ENCODE measurements at regions of chr12 and their contacts with region 1.

Region 1: DNA sequence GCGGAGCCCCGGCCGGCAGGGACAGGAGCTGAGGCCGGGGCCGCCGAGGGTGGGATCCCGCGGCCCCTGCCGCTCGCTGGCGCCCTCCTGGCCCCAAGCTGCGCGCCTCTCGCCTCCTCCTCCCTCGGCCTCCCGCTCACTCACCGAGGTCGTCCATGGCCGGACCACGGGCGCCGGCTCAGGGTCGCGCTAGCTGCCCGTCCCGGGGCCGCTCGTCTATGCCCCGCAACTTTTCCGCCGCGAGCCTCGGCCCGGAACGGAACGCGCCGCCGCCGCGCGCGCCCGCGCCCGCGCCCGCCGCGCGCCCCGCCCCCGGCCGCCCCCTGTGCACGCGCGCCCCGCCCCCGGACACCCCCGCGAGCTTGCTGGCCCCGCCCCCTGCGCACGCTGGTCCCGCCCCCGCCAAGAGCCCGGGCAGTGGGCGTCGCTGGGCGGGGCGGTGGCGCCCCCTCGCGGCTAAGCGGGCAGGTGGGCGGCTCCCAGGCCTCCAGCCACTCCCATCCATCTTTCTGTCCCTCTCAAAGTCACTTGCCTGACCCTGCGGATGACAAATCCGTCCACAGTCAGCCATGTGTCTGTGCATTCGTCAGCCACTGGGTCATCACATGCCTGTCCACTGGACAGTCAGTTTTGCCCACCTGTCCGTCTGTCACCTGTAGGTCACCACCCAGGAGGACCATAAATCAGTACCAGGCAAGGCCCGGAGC is at the start of gene PXN:
- DNase-seq: peak; percentile 92
- ATAC-seq: peak; percentile 91
- H3K4me3 Mint-ChIP-seq: peak within 1 kb of the TSS; percentile 90
- H3K27ac Mint-ChIP-seq: peak within 1 kb of the TSS; percentile 73
- H3K4me1 Mint-ChIP-seq: peaks cover 47% of the 10 kb centered on the region
- H3K27me3 Mint-ChIP-seq: no peaks in the 10 kb centered on the region
- total RNA-seq, gene PXN: 69.3 to 146 TPM

Region 2: GRCh38 chr12:120194534-120195395 is 70.9 kb before region 1 on chr12 and contains the start of gene GCN1:
- CTCF ChIA-PET with region 1: interaction called, 86 read pairs
- DNase-seq: peak; percentile 89
- ATAC-seq: peak; percentile 85
- H3K4me3 Mint-ChIP-seq: peak within 1 kb of the TSS; percentile 90
- H3K27ac Mint-ChIP-seq: peak within 1 kb of the TSS; percentile 95
- H3K4me1 Mint-ChIP-seq: peaks cover 70% of the 10 kb centered on the region
- H3K27me3 Mint-ChIP-seq: no peaks in the 10 kb centered on the region
- total RNA-seq, gene GCN1: 126 to 151 TPM

Region 3: DNA sequence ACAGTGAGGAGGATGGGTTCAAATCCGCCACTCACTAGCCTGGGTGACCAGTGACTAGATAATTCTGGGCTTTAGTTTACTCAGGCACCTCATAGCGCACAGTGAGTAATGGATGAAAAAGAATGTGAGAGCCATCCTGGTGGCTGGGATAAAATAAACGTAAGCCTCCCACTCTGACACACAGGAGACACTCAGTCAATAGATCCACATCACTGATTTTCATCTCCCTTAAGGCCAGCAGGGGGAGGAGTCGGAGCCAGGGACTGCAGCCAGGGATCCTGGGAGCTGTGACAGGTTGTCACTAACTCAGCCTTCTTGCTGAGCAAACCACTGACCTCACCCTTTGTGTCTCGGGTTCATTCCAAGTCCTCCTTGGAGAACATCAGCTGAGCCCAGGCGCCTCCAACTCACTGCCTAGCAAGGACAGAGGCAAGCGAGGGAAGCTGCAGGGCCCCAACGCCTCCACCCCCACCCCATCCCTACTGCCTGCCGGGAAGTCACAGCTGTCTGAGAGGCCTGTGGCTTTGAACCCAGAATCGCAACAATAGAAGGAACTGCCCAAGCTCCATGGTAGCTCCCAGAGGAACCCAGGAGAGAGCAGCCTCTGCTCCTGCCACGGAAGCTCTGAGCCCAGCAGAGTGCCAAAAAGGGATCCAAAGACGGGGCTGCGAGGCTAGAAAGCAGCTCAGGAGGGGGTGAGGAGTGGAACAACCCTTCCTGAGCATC is 30.8 kb before region 1 on chr12:
- CTCF ChIA-PET with region 1: interaction called, 768 read pairs
- DNase-seq: no peak
- ATAC-seq: no peak
- H3K4me3 Mint-ChIP-seq: no peak overlapping the region
- H3K27ac Mint-ChIP-seq: no peak overlapping the region
- H3K4me1 Mint-ChIP-seq: peaks cover 67% of the 10 kb centered on the region
- H3K27me3 Mint-ChIP-seq: no peaks in the 10 kb centered on the region

Region 4: DNA sequence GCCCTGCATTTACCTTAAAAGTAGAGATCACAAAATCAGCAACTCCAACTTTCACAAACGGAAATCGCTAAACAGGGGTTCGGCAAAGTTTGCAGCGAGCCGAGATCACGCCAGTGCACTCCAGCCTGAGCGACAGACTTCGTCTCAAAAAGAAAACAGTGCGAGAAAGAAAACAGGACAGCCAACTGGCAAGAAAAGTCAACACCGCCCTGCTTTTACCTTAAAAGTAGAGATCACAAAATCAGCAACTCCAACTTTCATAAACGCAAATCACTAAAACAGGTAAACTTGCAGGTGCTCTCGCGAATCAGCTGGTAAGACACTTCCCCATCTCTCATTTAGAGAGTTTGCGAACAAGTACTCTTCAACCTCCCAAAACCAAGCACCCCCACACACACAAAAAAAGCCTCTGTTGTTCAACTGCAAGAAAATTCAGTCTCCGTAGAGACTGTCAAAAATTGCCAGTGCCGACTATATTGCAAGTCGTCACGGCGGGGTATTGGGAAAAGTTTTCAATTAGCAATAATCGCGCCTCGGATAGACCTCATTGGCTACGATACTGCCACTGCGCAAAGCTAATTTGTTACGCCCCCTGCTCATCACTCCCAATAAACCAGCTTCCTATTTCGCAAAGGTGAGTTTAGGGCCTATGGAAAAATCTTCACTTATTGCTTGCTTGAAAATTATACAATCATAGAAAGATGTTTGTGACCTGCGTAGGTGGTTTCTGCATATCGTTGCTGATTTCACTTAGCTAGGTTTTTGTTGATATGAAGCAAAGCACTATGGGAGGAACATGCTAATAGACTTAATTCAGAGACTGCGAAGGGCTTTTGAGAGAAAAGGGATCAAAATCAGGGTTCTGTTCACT is 27.3 kb after region 1 on chr12 and contains the start of gene RNU4-1:
- CTCF ChIA-PET with region 1: interaction called, 27 read pairs
- DNase-seq: peak; percentile 90
- ATAC-seq: peak; percentile 45
- H3K4me3 Mint-ChIP-seq: no peak within 1 kb of the TSS
- H3K27ac Mint-ChIP-seq: no peak within 1 kb of the TSS
- H3K4me1 Mint-ChIP-seq: peaks cover 10% of the 10 kb centered on the region
- H3K27me3 Mint-ChIP-seq: peaks cover 2% of the 10 kb centered on the region
- total RNA-seq, gene RNU4-1: 780 to 2,122 TPM

Region 5: DNA sequence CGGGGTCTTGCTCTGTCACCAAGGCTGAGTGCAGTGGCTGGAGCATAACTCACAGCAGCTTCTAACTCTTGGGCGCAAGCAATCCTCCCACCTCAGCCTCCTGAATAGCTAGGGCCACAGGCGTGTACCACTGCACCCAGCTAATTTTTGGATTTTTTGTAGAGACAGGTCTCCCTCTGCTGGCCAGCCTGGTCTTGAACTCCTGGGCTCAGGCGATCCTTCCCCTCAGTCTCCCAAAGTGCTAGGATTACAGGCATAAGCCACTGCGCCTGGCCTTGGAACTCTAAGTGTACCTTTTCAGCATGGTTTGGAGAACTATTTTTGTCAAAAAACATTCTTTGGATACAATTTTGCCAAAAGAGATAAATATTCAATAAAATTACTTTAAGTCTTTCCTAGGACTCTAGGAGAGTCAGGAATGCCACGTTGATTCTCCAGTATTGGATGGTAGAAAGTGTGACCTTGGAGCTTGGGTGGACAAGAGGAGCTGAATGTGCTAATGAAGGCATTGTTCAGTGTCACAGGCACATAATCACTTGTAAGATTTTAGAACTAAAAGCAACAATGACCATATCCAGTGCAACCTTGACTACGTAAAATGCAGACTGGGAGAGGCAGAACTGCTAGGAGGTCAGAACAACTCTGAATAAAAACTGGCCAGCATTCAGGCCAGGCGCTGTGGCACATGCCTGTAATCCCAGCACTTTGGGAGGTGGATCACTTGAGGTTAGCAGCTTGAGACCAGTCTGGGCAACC is 201.1 kb after region 1 on chr12:
- CTCF ChIA-PET with region 1: no interaction called
- DNase-seq: peak; percentile 60
- ATAC-seq: no peak
- H3K4me3 Mint-ChIP-seq: peak overlapping the region; percentile 26
- H3K27ac Mint-ChIP-seq: peak overlapping the region; percentile 14
- H3K4me1 Mint-ChIP-seq: peaks cover 34% of the 10 kb centered on the region
- H3K27me3 Mint-ChIP-seq: no peaks in the 10 kb centered on the region

Measured in activated CD8-positive, alpha-beta memory T cell treated with anti-CD3 and anti-CD28 coated beads, Interleukin-2, amount 10 ng/mL, durations not matched to agents 7 days and 5 days (primary cell).